Activated T-helper 1 cell treated with anti-CD3 and anti-CD28 coated beads, Interleukin-12 subunit alpha, Interleukin-12 subunit beta, Interleukin-2, Interleukin-4 antibody, amounts not matched to agents 30 ng/mL and 10 ng/mL and 1 ng/mL, durations not matched to agents 14 hours and 24 hours and 36 hours (primary cell): ENCODE measurements at regions of chr4 and their contacts with region 1.

Region 1: DNA sequence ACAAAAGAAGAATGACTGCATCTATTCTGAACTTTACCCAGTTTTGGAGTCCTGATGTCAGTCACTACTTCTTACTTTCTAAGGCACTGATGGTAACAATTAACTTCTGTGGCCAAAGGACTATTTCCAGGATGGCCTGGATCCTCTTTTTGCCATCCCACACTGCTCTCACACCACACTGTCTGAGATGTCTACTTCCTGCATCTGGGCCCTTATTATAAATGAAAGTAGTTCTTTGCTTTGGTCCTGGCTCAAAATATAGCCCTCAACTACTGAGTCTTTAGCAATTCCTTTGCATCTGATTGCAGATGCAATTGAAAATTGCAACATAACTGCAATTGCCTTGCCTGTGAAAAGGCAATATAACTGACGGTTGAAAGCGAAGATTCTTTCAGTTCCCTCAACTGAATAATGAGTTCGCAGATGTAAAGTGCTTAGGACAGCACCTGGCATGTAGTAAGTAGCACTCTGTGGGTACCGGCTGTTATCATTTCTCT is 44.2 kb downstream of the COQ2 start:
- DNase-seq: no peak
- H3K4me3 Mint-ChIP-seq: no peak overlapping the region
- H3K27ac Mint-ChIP-seq: no peak overlapping the region
- H3K4me1 Mint-ChIP-seq: peaks cover 53% of the 10 kb centered on the region
- H3K27me3 Mint-ChIP-seq: peaks cover 49% of the 10 kb centered on the region

Region 2: GRCh38 chr4:82865592-82865991 is 374.8 kb before region 1 on chr4:
- intact Hi-C with region 1: loop called (anchors 5 kb)
- DNase-seq: peak; percentile 24
- H3K4me3 Mint-ChIP-seq: no peak overlapping the region
- H3K27ac Mint-ChIP-seq: peak overlapping the region; percentile 91
- H3K4me1 Mint-ChIP-seq: peaks cover 48% of the 10 kb centered on the region
- H3K27me3 Mint-ChIP-seq: no peaks in the 10 kb centered on the region

Region 3: DNA sequence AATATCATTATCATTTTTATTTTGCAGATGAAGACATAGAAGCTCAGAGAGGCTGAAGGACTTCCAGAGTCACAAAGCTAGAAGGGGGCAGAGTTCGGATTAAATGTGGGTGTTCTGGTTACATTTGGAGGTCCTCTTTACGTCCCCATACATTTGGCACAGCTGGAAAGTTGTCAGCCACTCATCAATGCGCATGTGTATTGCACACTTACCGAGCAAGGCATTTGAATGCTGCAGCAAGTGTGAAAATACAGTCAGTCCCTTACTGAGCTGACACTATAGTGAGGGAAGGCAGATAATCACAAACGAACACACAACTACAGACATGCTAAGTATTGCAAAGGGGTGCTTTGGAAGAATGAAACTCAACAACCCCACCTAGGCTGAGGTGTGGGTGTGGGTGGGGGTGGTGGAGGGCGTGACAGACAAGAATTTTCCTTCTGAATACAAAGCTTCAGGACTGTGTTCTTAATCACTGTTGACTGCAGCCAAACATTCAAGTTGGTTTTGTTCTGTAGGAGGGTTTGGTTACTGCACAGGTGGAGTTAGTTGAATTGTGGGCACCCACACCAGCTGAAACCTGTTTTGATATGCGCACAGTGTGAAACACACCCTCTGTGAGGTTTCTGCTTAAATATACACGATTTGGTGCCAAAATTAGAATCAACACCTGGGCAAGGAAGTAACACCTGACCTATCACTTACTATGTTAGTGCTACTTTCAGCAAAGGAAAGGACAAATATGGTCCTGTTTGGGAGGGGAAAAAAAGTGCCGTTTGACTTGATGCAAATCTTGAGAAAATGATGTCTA is 28.2 kb before region 1 on chr4:
- intact Hi-C with region 1: loop called (anchors 5 kb)
- DNase-seq: peak; percentile 59
- H3K4me3 Mint-ChIP-seq: peak overlapping the region; percentile 40
- H3K27ac Mint-ChIP-seq: peak overlapping the region; percentile 59
- H3K4me1 Mint-ChIP-seq: peaks cover 79% of the 10 kb centered on the region
- H3K27me3 Mint-ChIP-seq: peaks cover 5% of the 10 kb centered on the region

Region 4: DNA sequence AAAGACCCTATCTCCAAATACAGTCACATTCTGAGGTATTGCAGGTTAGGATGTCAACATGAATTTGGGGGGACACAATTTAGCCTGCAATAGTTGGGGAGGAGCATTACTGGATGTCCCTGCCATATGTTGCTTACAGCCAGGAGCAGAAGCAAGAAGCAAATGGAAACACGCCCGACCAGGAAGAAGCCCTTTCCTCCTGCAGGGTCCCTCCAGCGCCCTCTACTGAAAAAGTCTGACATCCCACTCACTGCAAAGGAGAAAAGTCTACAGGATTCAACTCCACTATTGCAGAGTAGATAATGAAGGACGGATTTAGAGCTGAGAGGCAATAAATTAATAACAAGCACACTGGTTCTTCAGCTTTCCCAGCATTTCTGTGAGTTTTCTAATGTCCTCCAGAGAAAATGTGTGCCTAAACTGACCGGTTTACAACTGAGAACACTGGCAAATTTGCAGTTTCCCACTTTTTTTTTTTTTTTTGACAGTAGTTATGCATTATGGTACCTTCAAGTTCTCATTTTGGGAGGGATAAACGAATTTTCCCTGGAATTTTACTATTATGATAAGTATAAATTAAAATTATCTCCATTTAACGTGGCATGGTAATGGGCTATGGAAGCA is 12.5 kb after region 1 on chr4:
- intact Hi-C with region 1: loop called (anchors 1 kb)
- DNase-seq: peak; percentile 62
- H3K4me3 Mint-ChIP-seq: no peak overlapping the region
- H3K27ac Mint-ChIP-seq: no peak overlapping the region
- H3K4me1 Mint-ChIP-seq: peaks cover 37% of the 10 kb centered on the region
- H3K27me3 Mint-ChIP-seq: peaks cover 7% of the 10 kb centered on the region